Calu3 (cell line): ENCODE measurements at regions of chr1 and their contacts with region 1.

Region 1: DNA sequence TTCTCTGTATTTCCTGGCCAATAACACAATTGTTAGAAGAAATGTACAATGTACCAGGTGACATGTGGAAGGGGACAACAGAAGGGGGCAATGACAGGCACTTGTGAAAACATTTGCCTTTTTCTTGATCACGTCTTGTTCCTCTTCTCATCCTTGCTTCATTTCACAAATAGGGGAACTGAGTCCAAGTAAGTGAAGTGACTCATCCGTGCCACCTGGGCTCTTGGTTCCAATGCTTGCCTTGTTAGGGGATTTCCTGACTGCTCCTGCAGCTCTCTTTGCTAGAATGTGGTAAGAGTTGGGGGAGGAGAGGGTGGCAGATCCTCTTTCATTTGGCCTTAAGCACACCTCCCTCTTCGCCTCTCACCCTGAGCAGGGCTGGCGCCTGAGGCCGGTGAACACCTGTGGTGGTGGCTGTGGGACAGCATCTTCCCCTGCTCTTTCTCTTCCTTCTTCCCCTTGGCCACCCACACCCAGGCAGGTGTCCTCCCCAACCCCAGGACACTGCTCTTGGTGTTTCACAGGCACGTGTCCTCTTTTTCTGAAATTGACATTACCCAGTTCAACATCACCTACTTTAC is 2.2 kb upstream of the RHEX start:
- DNase-seq: peak; percentile 89
- H3K4me3 Mint-ChIP-seq: peak overlapping the region; percentile 94
- H3K27ac Mint-ChIP-seq: peak overlapping the region; percentile 99
- H3K4me1 Mint-ChIP-seq: peaks cover 72% of the 10 kb centered on the region
- H3K27me3 Mint-ChIP-seq: no peaks in the 10 kb centered on the region
- CTCF ChIP-seq: no peak

Region 2: GRCh38 chr1:205950280-205950679 is 100.5 kb before region 1 on chr1:
- CTCF ChIA-PET with region 1: no interaction called
- intact Hi-C with region 1: no loop called
- DNase-seq: no peak
- H3K4me3 Mint-ChIP-seq: no peak overlapping the region
- H3K27ac Mint-ChIP-seq: no peak overlapping the region
- H3K4me1 Mint-ChIP-seq: peaks cover 41% of the 10 kb centered on the region
- H3K27me3 Mint-ChIP-seq: peaks cover 32% of the 10 kb centered on the region
- CTCF ChIP-seq: no peak

Region 3: DNA sequence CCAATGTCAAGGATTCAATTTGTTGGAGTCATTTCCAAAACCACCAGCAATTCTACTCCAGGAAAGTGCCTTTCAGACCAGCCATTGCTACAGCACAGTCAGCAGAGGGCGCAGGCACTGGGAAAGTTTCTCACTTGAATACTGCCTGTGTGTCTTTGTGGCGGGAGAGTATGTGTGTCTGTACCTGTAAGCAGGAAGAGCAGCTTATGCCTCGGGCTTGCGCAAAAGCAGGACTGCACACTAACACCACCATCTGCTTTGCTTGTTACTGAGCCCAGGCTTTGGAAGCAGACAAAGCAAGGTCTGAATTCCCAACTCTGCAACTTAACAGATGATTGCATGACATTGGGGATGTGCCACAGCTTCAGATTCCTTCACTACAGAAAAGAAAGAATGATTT is 20.0 kb before region 1 on chr1:
- CTCF ChIA-PET with region 1: interaction called, 19 read pairs
- intact Hi-C with region 1: loop called (anchors 1 kb)
- DNase-seq: peak; percentile 90
- H3K4me3 Mint-ChIP-seq: no peak overlapping the region
- H3K27ac Mint-ChIP-seq: peak overlapping the region; percentile 20
- H3K4me1 Mint-ChIP-seq: peaks cover 64% of the 10 kb centered on the region
- H3K27me3 Mint-ChIP-seq: no peaks in the 10 kb centered on the region
- CTCF ChIP-seq: peak; percentile 88

Region 4: GRCh38 chr1:206066479-206067171 is 15.9 kb after region 1 on chr1:
- CTCF ChIA-PET with region 1: interaction called, 19 read pairs
- intact Hi-C with region 1: no loop called
- DNase-seq: no peak
- H3K4me3 Mint-ChIP-seq: peak overlapping the region; percentile 62
- H3K27ac Mint-ChIP-seq: peak overlapping the region; percentile 91
- H3K4me1 Mint-ChIP-seq: peaks cover 69% of the 10 kb centered on the region
- H3K27me3 Mint-ChIP-seq: no peaks in the 10 kb centered on the region
- CTCF ChIP-seq: no peak